ENCODE measurements at regions of chr12 and their contacts with region 1.

Region 1: DNA sequence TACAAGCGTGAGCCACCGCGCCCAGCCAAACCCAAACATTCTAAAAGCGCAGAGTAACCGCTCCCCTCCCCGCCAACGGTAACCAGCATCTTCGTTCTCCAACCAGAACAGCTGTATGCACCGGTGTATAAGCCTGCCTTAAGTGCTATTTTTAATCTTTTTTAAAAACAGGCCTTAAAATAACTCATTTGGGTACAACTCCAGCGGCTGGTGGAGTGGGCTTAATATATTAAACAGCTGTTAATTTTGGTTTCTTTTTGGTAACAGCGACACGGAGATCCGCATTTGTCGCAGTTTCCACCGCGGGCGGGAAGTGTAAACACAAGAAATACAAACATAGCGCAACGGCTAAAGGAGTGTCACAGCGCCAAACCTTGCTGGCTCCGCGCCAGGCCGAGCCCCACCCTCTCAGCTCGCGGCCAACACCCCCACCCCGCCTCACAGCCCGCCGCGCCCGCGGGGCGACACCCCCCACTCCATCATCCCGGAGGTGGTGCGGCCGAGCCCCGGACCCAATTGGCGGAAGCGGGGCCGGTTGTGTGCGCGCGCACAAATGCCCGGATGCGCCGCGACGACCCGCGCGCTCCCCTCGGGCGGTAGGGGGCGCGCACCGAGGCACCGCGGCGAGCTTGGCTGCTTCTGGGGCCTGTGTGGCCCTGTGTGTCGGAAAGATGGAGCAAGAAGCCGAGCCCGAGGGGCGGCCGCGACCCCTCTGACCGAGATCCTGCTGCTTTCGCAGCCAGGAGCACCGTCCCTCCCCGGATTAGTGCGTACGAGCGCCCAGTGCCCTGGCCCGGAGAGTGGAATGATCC is at the start of gene MDM2:
- DNase-seq: peak; percentile 90
- ATAC-seq: peak; percentile 73
- H3K4me3 ChIP-seq: peak within 1 kb of the TSS; percentile 82 to 94 (median 88)
- H3K27ac ChIP-seq: peak within 1 kb of the TSS; percentile 99
- H3K4me1 ChIP-seq: peaks cover 27% of the 10 kb centered on the region
- H3K27me3 ChIP-seq: peaks cover 0 to 5% of the 10 kb centered on the region in 2 experiments; a peak in 1 of 5 replicates
- CTCF ChIP-seq: peak; percentile 86
- EP300 ChIP-seq: peak in 1 of 2 experiments; percentile 40; a peak in 2 of 4 replicates
- POLR2A ChIP-seq: peak; percentile 66 to 80; a peak in 3 of 4 replicates
- RAD21 ChIP-seq: peak; percentile 69
- total RNA-seq, gene MDM2: 314 and 466 TPM in 2 replicates

Region 2: DNA sequence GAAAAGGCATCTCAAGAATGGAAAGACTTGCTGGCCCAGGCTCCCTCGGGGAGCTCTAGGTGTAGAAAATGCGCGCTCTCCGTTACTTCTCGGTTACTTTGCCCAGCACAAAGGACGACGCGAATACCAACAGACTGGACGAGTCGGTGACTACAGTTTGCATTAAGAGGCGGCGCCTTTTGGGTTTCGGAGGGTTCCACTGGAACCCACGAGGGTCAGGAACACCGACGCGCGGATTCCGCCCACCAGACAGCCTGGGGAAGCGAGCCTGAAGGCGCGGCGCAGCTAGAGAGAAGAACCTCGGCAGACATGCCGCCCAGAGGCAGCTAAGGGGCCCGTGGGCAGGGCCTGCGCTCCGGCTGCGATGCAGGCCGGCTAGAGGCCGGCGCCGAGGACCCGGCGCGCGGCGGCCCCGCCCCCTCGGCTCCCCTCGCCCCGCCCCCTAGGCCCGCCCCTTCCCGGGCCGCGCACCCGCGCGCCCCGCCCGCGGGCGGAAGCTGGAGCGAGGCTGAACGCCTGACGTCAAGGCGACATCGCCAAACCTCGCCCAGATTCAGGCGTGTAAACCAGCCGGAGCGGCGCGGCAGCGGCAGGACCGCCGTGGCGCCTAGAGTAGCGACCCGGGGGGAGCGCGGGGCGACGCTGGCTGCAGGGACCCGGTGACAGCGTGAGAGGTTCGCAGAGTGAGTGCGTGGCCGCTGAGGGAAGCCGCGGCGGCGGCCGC is 197.2 kb before region 1 on chr12 and contains the start of gene RAP1B:
- CTCF ChIA-PET with region 1: no interaction called
- POLR2A ChIA-PET with region 1: interaction called, 3 read pairs
- in situ Hi-C with region 1: no loop called
- intact Hi-C with region 1: loop called (anchors 5 kb)
- DNase-seq: peak; percentile 79
- ATAC-seq: peak; percentile 96
- H3K4me3 ChIP-seq: peak within 1 kb of the TSS; percentile 83 to 99 (median 86)
- H3K27ac ChIP-seq: peak within 1 kb of the TSS; percentile 87
- H3K4me1 ChIP-seq: peaks cover 41% of the 10 kb centered on the region
- H3K27me3 ChIP-seq: no peaks in the 10 kb centered on the region; a peak in 1 of 5 replicates
- CTCF ChIP-seq: no peak
- EP300 ChIP-seq: no peak
- POLR2A ChIP-seq: peak; percentile 92
- RAD21 ChIP-seq: no peak; the same call in none of the 2 replicates
- total RNA-seq, gene RAP1B: 92.7 and 129 TPM in 2 replicates

Region 3: GRCh38 chr12:68745904-68746571 is 61.7 kb before region 1 on chr12 and contains the start of gene SLC35E3:
- CTCF ChIA-PET with region 1: no interaction called
- POLR2A ChIA-PET with region 1: interaction called, 58 read pairs
- in situ Hi-C with region 1: loop called (anchors 5 kb)
- intact Hi-C with region 1: loop called (anchors 1 kb)
- DNase-seq: peak; percentile 88
- ATAC-seq: peak; percentile 98
- H3K4me3 ChIP-seq: peak within 1 kb of the TSS; percentile 83 to 93 (median 87)
- H3K27ac ChIP-seq: peak within 1 kb of the TSS; percentile 75
- H3K4me1 ChIP-seq: peaks cover 34% of the 10 kb centered on the region
- H3K27me3 ChIP-seq: no peaks in the 10 kb centered on the region; a peak in 1 of 5 replicates
- CTCF ChIP-seq: no peak
- EP300 ChIP-seq: no peak
- POLR2A ChIP-seq: peak; percentile 74 to 96
- RAD21 ChIP-seq: no peak
- total RNA-seq, gene SLC35E3: 12.2 and 22.1 TPM in 2 replicates

Region 4: DNA sequence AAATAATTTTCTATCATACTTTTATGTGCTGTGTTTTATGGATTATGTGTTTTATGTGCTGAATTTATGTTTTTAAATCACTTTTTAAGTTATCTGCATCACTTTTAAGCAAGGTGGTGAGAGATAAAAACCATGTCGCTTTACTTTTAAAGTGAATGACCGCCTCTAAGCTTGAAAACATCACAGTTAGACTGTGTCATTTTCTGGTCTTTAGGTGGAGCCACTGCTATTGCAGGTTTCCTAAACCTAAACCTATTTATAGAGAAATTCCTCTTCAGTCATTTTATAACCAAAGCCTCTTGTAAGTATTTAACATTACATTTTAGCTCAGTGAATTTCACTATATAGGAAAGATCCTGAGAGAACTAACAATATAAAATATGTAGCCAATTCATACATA is 20.9 kb before region 1 on chr12:
- CTCF ChIA-PET with region 1: interaction called, 3 read pairs
- POLR2A ChIA-PET with region 1: interaction called, 184 read pairs
- in situ Hi-C with region 1: no loop called
- intact Hi-C with region 1: loop called (anchors 1 kb)
- DNase-seq: peak; percentile 56
- ATAC-seq: peak; percentile 4; the same call in 2 of the 3 replicates
- H3K4me3 ChIP-seq: peak overlapping the region in 2 of 3 experiments; percentile 13 to 36; a peak in 1 of 6 replicates
- H3K27ac ChIP-seq: peak overlapping the region; percentile 91
- H3K4me1 ChIP-seq: peaks cover 85% of the 10 kb centered on the region
- H3K27me3 ChIP-seq: no peaks in the 10 kb centered on the region
- CTCF ChIP-seq: peak; percentile 39; the same call in 1 of the 2 replicates
- EP300 ChIP-seq: no peak
- POLR2A ChIP-seq: no peak
- RAD21 ChIP-seq: no peak

Region 5: GRCh38 chr12:68792952-68793835 is 14.6 kb before region 1 on chr12:
- CTCF ChIA-PET with region 1: no interaction called
- POLR2A ChIA-PET with region 1: interaction called, 184 read pairs
- in situ Hi-C with region 1: no loop called
- intact Hi-C with region 1: loop called (anchors 2 kb)
- DNase-seq: peak; percentile 70
- ATAC-seq: peak; percentile 69
- H3K4me3 ChIP-seq: no peak overlapping the region
- H3K27ac ChIP-seq: no peak overlapping the region
- H3K4me1 ChIP-seq: peaks cover 47% of the 10 kb centered on the region
- H3K27me3 ChIP-seq: no peaks in the 10 kb centered on the region
- CTCF ChIP-seq: no peak
- EP300 ChIP-seq: no peak
- POLR2A ChIP-seq: no peak
- RAD21 ChIP-seq: no peak

Region 6: DNA sequence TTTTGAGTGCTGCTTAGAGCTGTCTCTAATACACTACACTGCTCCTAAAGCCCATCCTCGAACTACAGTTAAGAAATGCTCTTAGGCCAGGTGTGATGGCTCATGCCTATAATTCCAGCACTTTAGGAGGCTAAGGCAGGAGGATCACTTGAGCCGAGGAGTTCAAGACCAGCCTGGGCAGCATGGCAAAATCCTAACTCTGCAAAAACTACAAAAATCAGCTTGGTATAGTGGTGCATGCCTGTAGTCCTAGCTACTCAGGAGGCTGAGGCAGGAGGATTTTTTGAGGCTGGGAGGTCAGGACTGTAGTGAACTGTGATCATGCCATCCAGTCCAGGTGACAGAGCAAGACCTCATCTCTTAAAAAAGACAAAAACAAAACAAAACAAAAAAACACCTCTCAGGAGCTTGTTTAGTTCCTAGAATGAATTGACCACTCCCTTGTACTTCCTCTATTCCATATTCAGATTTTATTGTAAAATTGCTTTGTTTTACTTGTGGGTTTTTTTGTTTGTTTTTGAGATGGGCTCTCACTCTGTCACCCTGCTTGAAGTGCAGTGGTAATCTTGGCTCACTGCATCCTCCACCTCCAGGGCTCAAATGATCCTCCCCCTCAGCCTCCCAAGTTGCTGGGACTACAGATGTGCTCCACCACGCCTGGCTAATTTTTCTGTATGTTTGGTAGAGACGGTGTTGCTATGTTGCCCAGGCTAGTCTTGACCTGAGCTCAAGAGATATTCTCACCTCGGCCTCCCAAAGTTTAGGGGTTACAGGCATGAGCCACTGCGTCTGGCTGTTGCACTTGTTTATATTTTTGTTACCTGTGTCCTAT is 13.8 kb after region 1 on chr12:
- CTCF ChIA-PET with region 1: no interaction called
- POLR2A ChIA-PET with region 1: interaction called, 28 read pairs
- in situ Hi-C with region 1: no loop called
- intact Hi-C with region 1: no loop called
- DNase-seq: no peak
- ATAC-seq: peak; percentile 58
- H3K4me3 ChIP-seq: no peak overlapping the region
- H3K27ac ChIP-seq: peak overlapping the region; percentile 1
- H3K4me1 ChIP-seq: peaks cover 59% of the 10 kb centered on the region
- H3K27me3 ChIP-seq: no peaks in the 10 kb centered on the region
- CTCF ChIP-seq: no peak
- EP300 ChIP-seq: no peak
- POLR2A ChIP-seq: 0 out of 4 replicates have a peak, but pooled peaks of 1 of the 2 experiments have one; percentile 19
- RAD21 ChIP-seq: no peak

Region 7: GRCh38 chr12:68831272-68831671 is 23.5 kb after region 1 on chr12:
- CTCF ChIA-PET with region 1: no interaction called
- POLR2A ChIA-PET with region 1: interaction called, 14 read pairs
- in situ Hi-C with region 1: no loop called
- intact Hi-C with region 1: no loop called
- DNase-seq: no peak
- ATAC-seq: peak; percentile 40
- H3K4me3 ChIP-seq: no peak overlapping the region
- H3K27ac ChIP-seq: no peak overlapping the region
- H3K4me1 ChIP-seq: peaks cover 9% of the 10 kb centered on the region; the same call in 1 of the 2 replicates
- H3K27me3 ChIP-seq: no peaks in the 10 kb centered on the region
- CTCF ChIP-seq: no peak
- EP300 ChIP-seq: no peak
- POLR2A ChIP-seq: peak in 1 of 2 experiments; percentile 19; a peak in 1 of 4 replicates
- RAD21 ChIP-seq: no peak

Region 8: GRCh38 chr12:68904351-68904962 is 96.7 kb after region 1 on chr12:
- CTCF ChIA-PET with region 1: no interaction called
- POLR2A ChIA-PET with region 1: no interaction called
- in situ Hi-C with region 1: no loop called
- intact Hi-C with region 1: no loop called
- DNase-seq: no peak
- ATAC-seq: no peak
- H3K4me3 ChIP-seq: no peak overlapping the region
- H3K27ac ChIP-seq: no peak overlapping the region
- H3K4me1 ChIP-seq: peaks cover 13% of the 10 kb centered on the region
- H3K27me3 ChIP-seq: no peaks in the 10 kb centered on the region
- CTCF ChIP-seq: no peak
- EP300 ChIP-seq: no peak
- POLR2A ChIP-seq: no peak
- RAD21 ChIP-seq: no peak

Measured in HepG2 (cell line).